Activated CD4-positive, alpha-beta T cell treated with anti-CD3 and anti-CD28 coated beads, Interleukin-2, amount 10 ng/mL, durations not matched to agents 24 days and 14 days (primary cell): ENCODE measurements at regions of chr1 and their contacts with region 1.

Region 1: DNA sequence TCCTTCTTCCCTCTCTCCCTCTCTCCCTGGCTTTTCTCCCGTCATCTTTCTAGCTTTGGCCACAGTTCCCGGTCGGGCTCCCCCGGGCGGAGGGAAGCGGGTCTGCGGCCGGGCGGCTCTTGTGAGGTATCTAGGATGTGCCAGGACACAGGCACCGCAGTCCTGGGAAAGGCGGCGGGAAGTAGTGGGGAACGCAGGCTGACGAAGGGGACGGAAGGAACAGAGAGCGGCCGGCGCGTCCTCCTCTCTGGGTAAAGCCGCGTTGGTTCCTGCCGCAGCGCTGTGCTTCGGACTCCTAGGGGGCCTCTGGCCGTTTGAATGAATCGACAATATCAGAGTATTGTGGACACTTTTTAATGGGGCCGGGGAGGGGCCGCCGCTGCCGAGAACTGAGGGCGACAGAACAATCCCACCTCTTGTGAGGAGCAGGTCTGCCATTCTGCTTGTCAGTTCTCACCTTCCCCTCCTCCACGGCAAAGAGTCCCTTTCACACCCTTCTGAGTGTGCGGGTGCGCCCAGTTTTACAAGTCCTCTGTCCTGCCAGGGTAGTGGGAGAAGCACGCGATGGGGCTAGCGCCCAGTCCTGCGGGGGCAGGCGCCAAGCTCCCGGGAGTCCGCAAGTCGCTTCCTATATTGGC is 1.2 kb upstream of the LHX9 start:
- DNase-seq: peak; percentile 71
- H3K4me3 Mint-ChIP-seq: peak overlapping the region; percentile 80
- H3K27ac Mint-ChIP-seq: no peak overlapping the region
- H3K4me1 Mint-ChIP-seq: peaks cover 68% of the 10 kb centered on the region
- H3K27me3 Mint-ChIP-seq: peaks cover 97% of the 10 kb centered on the region

Region 2: GRCh38 chr1:197902454-197903195 is 13.4 kb before region 1 on chr1 and contains the start of gene C1orf53:
- intact Hi-C with region 1: loop called (anchors 2 kb)
- DNase-seq: peak; percentile 94
- H3K4me3 Mint-ChIP-seq: peak within 1 kb of the TSS; percentile 83
- H3K27ac Mint-ChIP-seq: peak within 1 kb of the TSS; percentile 80
- H3K4me1 Mint-ChIP-seq: peaks cover 8% of the 10 kb centered on the region
- H3K27me3 Mint-ChIP-seq: peaks cover 68% of the 10 kb centered on the region
- total RNA-seq, gene C1orf53: 1.0 and 1.3 TPM in 2 replicates

Region 3: GRCh38 chr1:197928849-197929336 is 12.9 kb after region 1 on chr1:
- intact Hi-C with region 1: no loop called
- DNase-seq: peak; percentile 74
- H3K4me3 Mint-ChIP-seq: peak overlapping the region; percentile 82
- H3K27ac Mint-ChIP-seq: no peak overlapping the region
- H3K4me1 Mint-ChIP-seq: peaks cover 9% of the 10 kb centered on the region
- H3K27me3 Mint-ChIP-seq: peaks cover 72% of the 10 kb centered on the region

Region 4: GRCh38 chr1:197955486-197956394 is 39.8 kb after region 1 on chr1:
- intact Hi-C with region 1: no loop called
- DNase-seq: no peak
- H3K4me3 Mint-ChIP-seq: no peak overlapping the region
- H3K27ac Mint-ChIP-seq: no peak overlapping the region
- H3K4me1 Mint-ChIP-seq: peaks cover 2% of the 10 kb centered on the region
- H3K27me3 Mint-ChIP-seq: peaks cover 8% of the 10 kb centered on the region

Region 5: DNA sequence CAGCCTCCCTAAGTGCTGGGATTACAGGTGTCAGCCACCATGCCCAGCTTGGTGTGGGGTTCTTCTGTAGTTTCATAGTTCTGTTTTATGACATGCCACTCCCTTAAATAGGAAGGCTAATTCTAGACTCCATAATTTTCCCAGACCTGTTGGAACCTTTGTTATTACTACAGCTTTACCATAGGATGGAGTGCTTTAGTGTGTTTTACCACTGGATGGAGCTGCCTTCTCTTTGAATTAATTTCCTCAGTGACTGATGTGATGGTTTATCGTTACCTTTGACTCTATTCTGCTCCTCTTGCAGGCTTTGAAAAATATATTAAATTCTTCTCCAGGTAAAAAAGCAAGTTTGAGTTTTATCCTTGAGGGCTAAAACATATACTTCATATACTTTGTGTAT is 156.2 kb after region 1 on chr1:
- intact Hi-C with region 1: no loop called
- DNase-seq: no peak
- H3K4me3 Mint-ChIP-seq: no peak overlapping the region
- H3K27ac Mint-ChIP-seq: no peak overlapping the region
- H3K4me1 Mint-ChIP-seq: no peaks in the 10 kb centered on the region
- H3K27me3 Mint-ChIP-seq: peaks cover 25% of the 10 kb centered on the region

Region 6: GRCh38 chr1:198359024-198359653 is 443.2 kb after region 1 on chr1:
- intact Hi-C with region 1: loop called (anchors 10 kb)
- DNase-seq: no peak
- H3K4me3 Mint-ChIP-seq: no peak overlapping the region
- H3K27ac Mint-ChIP-seq: no peak overlapping the region
- H3K4me1 Mint-ChIP-seq: no peaks in the 10 kb centered on the region
- H3K27me3 Mint-ChIP-seq: peaks cover 8% of the 10 kb centered on the region